Prostate gland (tissue), 2 donors: ENCODE measurements at regions of chr12 and their contacts with region 1.

Region 1: GRCh38 chr12:94240171-94240570 is 91.8 kb downstream of the PLXNC1 start:
- DNase-seq: no peak
- H3K4me3 ChIP-seq: no peak overlapping the region
- H3K27ac ChIP-seq: no peak overlapping the region
- H3K4me1 ChIP-seq: no peaks in the 10 kb centered on the region
- H3K27me3 ChIP-seq: no peaks in the 10 kb centered on the region
- CTCF ChIP-seq: no peak
- POLR2A ChIP-seq: no peak

Region 2: GRCh38 chr12:93279565-93280412 is 960.4 kb before region 1 on chr12:
- intact Hi-C with region 1: no loop called
- DNase-seq: no peak
- H3K4me3 ChIP-seq: no peak overlapping the region
- H3K27ac ChIP-seq: no peak overlapping the region
- H3K4me1 ChIP-seq: no peaks in the 10 kb centered on the region
- H3K27me3 ChIP-seq: no peaks in the 10 kb centered on the region
- CTCF ChIP-seq: no peak
- POLR2A ChIP-seq: no peak

Region 3: GRCh38 chr12:94261119-94261518 is 20.9 kb after region 1 on chr12:
- intact Hi-C with region 1: loop called (anchors 1 kb)
- DNase-seq: no peak
- H3K4me3 ChIP-seq: no peak overlapping the region
- H3K27ac ChIP-seq: no peak overlapping the region
- H3K4me1 ChIP-seq: no peaks in the 10 kb centered on the region
- H3K27me3 ChIP-seq: no peaks in the 10 kb centered on the region
- CTCF ChIP-seq: no peak
- POLR2A ChIP-seq: no peak